Colonic mucosa (tissue), 4 donors: ENCODE measurements at regions of chr12 and their contacts with region 1.

Region 1: GRCh38 chr12:123580772-123581171 is 3.6 kb upstream of the TMED2 start:
- DNase-seq: no peak
- H3K4me3 ChIP-seq: no peak overlapping the region
- H3K27ac ChIP-seq: no peak overlapping the region
- H3K4me1 ChIP-seq: peaks cover 19% of the 10 kb centered on the region
- H3K27me3 ChIP-seq: no peaks in the 10 kb centered on the region
- CTCF ChIP-seq: no peak

Region 2: DNA sequence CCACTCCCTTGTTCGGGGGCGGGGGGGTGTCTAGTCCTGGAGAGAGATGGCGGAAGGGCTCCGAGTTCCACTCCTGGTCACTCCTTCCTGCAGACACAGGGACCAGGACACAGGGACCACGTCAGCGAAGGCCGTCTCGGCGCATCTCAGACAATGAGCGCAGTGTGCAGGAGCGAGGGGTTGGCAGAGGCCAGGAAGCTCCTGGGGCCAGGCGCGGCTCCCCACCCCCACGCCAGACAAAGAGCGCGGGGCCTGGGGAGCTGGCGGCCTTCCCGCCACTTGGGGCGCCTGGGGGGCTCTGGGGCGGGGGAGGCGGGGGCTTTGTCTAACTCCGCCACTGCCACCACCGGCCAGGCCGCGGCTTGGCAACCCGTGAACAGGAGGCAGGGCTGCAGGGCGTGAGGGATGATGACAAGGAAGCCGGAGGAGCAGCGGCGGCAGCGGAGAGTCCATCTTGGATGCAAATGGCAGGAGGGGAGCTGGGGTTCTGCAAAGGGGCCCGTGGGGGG is 311.3 kb before region 1 on chr12:
- intact Hi-C with region 1: loop called (anchors 5 kb)
- DNase-seq: peak; percentile 65
- H3K4me3 ChIP-seq: peak overlapping the region; percentile 79
- H3K27ac ChIP-seq: peak overlapping the region; percentile 48
- H3K4me1 ChIP-seq: peaks cover 3% of the 10 kb centered on the region
- H3K27me3 ChIP-seq: no peaks in the 10 kb centered on the region
- CTCF ChIP-seq: no peak

Region 3: DNA sequence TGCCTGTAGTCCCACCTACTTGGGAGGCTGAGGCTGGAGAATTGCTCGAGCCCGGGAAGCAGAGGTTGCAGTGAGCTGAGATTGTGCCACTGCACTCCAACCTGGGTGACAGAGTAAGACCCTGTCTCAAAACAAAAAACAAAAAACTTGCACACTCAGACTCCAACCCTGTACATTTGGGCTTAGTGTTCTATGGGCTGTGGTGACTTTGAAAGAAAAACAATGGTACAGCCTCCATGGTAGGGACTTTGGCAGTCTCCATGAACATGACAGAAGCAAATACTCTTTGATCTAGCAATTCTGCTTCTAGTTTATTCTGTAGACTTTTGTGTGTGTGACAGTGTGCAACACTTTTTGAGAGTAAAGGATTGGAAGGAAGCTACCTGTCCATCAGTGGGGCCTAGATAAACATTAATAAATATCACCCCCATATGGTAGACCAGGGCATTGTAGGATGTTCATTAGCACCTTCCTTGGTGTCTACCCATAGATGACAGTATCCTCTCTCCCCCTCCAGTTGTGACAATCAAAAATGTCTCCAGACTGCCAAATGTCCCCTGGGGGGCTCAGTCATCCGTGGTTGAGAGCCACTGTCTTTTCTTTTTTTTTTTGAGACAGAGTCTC is 112.1 kb before region 1 on chr12:
- intact Hi-C with region 1: no loop called
- DNase-seq: no peak
- H3K4me3 ChIP-seq: no peak overlapping the region
- H3K27ac ChIP-seq: no peak overlapping the region
- H3K4me1 ChIP-seq: no peaks in the 10 kb centered on the region
- H3K27me3 ChIP-seq: no peaks in the 10 kb centered on the region
- CTCF ChIP-seq: no peak